Activated B cell treated with CpG ODN at 0.5 μM for 24 hours (primary cell): ENCODE measurements at regions of chr5 and their contacts with region 1.

Region 1: DNA sequence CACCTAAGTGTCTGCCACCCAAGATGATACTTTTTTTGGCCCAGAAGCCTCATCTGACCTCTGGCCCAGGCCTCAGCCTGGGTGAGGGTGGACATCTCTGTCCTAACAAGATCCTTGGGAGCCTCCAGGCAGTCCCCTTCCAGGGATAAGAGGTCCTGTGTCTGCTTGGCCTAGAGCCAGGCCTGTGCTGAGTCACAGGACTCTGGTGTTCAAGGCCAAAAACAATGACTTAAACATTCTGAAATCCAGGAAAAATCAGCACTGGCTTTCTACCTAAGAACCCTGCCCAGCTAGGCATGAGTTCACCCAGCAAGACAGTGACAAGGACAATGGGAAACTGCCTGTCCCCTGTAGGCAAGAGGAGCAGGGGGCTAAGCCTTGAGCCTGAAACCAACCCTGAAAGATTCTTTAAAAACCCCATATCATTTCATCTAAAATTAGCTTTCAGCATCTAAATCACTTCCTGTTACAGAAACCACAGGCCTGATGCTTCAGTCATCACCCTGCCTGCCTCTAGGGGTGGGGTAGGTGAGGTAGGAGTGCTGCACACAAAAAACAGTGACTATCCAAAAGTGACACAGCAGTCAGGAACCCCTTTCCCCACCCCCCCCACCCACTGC is 29.9 kb downstream of the CSF2 start:
- DNase-seq: no peak
- ATAC-seq: peak; percentile 70
- H3K4me3 Mint-ChIP-seq: peak overlapping the region; percentile 53
- H3K27ac Mint-ChIP-seq: peak overlapping the region; percentile 84
- H3K4me1 Mint-ChIP-seq: peaks cover 82% of the 10 kb centered on the region
- H3K27me3 Mint-ChIP-seq: no peaks in the 10 kb centered on the region
- CTCF ChIP-seq: no peak

Region 2: DNA sequence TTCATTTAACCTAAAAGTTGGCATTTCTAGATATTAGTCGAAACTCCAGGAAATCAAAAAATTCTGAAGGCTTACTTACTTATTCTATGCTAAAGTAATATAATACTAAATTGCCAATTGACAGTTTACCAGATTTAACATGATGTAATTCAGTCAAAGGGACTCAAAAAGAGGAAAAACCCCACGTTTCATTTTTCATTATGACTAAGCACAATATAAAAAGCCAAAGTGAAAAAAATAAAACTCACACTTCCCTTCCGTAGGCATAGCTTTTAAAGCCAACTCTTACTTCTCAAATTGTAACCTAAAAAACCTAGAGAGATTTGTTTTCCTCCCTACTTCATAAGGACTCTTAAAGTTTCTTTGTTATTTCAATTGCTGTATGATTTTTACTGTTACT is 615.0 kb before region 1 on chr5:
- CTCF ChIA-PET with region 1: no interaction called
- POLR2A ChIA-PET with region 1: no interaction called
- intact Hi-C with region 1: loop called (anchors 2 kb)
- DNase-seq: no peak
- ATAC-seq: peak; percentile 72
- H3K4me3 Mint-ChIP-seq: peak overlapping the region; percentile 46
- H3K27ac Mint-ChIP-seq: peak overlapping the region; percentile 80
- H3K4me1 Mint-ChIP-seq: peaks cover 23% of the 10 kb centered on the region
- H3K27me3 Mint-ChIP-seq: no peaks in the 10 kb centered on the region
- CTCF ChIP-seq: no peak

Region 3: DNA sequence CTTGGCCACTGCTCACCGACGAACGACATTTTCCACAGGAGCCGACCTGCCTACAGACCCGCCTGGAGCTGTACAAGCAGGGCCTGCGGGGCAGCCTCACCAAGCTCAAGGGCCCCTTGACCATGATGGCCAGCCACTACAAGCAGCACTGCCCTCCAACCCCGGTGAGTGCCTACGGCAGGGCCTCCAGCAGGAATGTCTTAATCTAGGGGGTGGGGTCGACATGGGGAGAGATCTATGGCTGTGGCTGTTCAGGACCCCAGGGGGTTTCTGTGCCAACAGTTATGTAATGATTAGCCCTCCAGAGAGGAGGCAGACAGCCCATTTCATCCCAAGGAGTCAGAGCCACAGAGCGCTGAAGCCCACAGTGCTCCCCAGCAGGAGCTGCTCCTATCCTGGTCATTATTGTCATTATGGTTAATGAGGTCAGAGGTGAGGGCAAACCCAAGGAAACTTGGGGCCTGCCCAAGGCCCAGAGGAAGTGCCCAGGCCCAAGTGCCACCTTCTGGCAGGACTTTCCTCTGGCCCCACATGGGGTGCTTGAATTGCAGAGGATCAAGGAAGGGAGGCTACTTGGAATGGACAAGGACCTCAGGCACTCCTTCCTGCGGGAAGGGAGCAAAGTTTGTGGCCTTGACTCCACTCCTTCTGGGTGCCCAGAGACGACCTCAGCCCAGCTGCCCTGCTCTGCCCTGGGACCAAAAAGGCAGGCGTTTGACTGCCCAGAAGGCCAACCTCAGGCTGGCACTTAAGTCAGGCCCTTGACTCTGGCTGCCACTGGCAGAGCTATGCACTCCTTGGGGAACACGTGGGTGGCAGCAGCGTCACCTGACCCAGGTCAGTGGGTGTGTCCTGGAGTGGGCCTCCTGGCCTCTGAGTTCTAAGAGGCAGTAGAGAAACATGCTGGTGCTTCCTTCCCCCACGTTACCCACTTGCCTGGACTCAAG is 28.4 kb before region 1 on chr5:
- CTCF ChIA-PET with region 1: no interaction called
- POLR2A ChIA-PET with region 1: no interaction called
- intact Hi-C with region 1: no loop called
- DNase-seq: no peak
- ATAC-seq: no peak
- H3K4me3 Mint-ChIP-seq: no peak overlapping the region
- H3K27ac Mint-ChIP-seq: no peak overlapping the region
- H3K4me1 Mint-ChIP-seq: no peaks in the 10 kb centered on the region
- H3K27me3 Mint-ChIP-seq: no peaks in the 10 kb centered on the region
- CTCF ChIP-seq: no peak

Region 4: GRCh38 chr5:132134384-132134783 is 30.9 kb after region 1 on chr5:
- CTCF ChIA-PET with region 1: interaction called, 12 read pairs
- POLR2A ChIA-PET with region 1: no interaction called
- intact Hi-C with region 1: loop called (anchors 2 kb)
- DNase-seq: no peak
- ATAC-seq: no peak
- H3K4me3 Mint-ChIP-seq: no peak overlapping the region
- H3K27ac Mint-ChIP-seq: no peak overlapping the region
- H3K4me1 Mint-ChIP-seq: no peaks in the 10 kb centered on the region
- H3K27me3 Mint-ChIP-seq: peaks cover 8% of the 10 kb centered on the region
- CTCF ChIP-seq: no peak

Region 5: DNA sequence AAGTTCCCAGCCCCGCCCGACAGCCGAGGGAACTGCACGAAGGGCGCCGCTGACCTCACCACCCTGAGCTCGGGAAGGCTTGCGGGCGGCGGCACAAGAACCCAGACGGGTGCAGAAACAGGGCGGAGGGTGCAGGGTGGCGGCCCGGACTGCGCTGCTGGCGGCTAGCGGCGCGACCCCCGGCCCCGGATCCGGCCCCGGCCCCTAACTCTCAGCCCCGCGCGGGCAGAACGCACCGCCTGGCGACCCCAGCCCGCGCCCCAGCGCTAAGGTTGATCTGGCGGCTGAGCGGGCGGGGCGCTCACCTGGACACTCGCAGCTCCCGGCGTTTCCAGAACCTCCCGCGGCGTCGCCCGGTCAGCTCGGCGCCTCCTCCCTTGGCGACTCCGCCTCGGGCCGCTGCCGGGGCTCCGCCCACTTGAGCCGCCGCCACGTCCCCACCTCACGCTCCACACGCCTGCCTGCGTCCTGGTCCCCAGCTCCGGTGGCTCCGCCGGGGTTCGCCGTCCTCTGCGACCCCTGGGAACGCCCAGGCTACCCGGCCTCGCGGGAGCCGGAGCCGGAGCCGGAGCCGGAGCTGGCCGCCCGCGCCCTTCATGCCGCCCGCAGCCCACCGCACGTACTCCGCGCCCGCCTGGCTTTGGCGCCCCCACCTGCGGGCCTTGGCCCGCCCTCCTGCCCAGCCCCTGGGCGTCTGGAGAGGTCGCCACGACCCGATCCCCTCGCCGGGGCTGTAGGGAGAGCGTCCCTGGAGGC is 124.2 kb after region 1 on chr5 and contains the start of gene P4HA2:
- CTCF ChIA-PET with region 1: no interaction called
- POLR2A ChIA-PET with region 1: no interaction called
- intact Hi-C with region 1: loop called (anchors 5 kb)
- DNase-seq: peak; percentile 60
- ATAC-seq: peak; percentile 83
- H3K4me3 Mint-ChIP-seq: peak within 1 kb of the TSS; percentile 65
- H3K27ac Mint-ChIP-seq: no peak within 1 kb of the TSS
- H3K4me1 Mint-ChIP-seq: peaks cover 31% of the 10 kb centered on the region
- H3K27me3 Mint-ChIP-seq: peaks cover 11% of the 10 kb centered on the region
- CTCF ChIP-seq: no peak
- total RNA-seq, gene P4HA2: 0.29 and 0.44 TPM in 2 replicates

Region 6: DNA sequence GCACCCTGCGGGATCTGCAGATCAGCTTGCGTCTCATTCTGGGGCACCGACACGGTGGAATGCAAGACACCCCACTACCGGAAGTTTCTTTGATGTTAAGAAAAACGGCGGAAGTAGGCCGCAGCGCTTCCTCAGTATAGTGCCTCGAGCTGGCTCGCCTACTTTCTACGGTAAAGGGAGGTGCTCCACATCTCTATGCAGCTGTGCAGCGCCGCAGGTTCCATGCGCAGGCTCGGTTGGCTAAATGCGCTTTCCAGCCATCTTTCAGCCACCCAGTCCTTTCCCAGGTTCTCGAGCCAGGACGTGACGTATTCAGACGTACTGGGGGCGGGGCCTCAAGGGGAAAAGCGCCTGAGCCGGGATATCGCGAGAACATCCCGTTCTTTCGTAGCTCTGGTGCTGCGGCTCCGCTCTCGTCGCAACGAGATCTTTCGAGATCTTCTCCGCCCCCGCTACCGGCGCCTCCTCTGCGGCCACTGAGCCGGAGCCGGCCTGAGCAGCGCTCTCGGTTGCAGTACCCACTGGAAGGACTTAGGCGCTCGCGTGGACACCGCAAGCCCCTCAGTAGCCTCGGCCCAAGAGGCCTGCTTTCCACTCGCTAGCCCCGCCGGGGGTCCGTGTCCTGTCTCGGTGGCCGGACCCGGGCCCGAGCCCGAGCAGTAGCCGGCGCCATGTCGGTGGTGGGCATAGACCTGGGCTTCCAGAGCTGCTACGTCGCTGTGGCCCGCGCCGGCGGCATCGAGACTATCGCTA is 948.3 kb after region 1 on chr5 and contains the start of gene HSPA4:
- CTCF ChIA-PET with region 1: no interaction called
- POLR2A ChIA-PET with region 1: no interaction called
- intact Hi-C with region 1: loop called (anchors 5 kb)
- DNase-seq: peak; percentile 93
- ATAC-seq: peak; percentile 85
- H3K4me3 Mint-ChIP-seq: peak within 1 kb of the TSS; percentile 96
- H3K27ac Mint-ChIP-seq: peak within 1 kb of the TSS; percentile 99
- H3K4me1 Mint-ChIP-seq: peaks cover 64% of the 10 kb centered on the region
- H3K27me3 Mint-ChIP-seq: no peaks in the 10 kb centered on the region
- CTCF ChIP-seq: no peak
- total RNA-seq, gene HSPA4: 152 and 162 TPM in 2 replicates